ENCODE measurements at regions of chr1 and their contacts with region 1.

Region 1: GRCh38 chr1:57321776-57322175 is 102.1 kb downstream of the DAB1 start:
- DNase-seq: no peak
- H3K4me3 ChIP-seq: no peak overlapping the region
- H3K27ac ChIP-seq: no peak overlapping the region
- H3K4me1 ChIP-seq: no peaks in the 10 kb centered on the region
- H3K27me3 ChIP-seq: no peaks in the 10 kb centered on the region
- CTCF ChIP-seq: no peak
- POLR2A ChIP-seq: no peak

Region 2: DNA sequence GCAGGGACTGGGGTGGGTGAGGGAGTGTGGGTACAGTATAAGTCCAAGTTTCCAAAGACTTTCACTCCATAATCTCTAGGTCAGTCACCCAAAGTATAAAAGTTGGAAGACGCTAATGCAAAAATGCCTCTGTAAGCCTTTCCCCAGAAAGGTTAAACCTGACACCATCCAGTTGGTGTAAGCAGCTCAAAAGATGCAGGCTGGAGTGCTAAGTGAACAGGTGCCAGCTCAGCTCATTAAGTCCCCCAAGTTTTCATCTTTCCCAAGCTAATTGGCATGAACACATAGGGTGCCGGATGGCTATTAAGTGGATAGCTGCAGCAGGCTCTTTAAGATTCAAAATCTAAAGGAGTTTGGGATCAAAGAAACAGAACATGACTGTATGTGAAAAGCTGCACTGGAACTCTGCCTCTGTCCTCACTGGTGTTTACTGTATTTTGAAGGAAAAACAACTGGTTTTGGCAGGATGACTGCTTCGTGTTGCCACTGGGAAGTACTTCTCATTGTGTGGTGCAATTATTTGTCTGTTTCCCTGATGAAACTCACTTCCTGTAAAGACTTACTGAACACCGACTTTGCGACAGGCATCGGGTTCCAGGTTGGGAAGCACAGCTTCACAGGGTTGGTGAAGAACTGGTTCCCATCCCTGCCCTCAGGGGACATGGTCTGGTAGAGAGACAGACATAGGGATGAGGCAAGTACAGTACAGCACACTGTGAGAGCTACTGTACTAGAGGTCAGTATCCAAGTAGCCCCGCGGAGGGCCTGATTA is 50.7 kb before region 1 on chr1:
- intact Hi-C with region 1: no loop called
- DNase-seq: no peak
- H3K4me3 ChIP-seq: no peak overlapping the region
- H3K27ac ChIP-seq: no peak overlapping the region
- H3K4me1 ChIP-seq: no peaks in the 10 kb centered on the region
- H3K27me3 ChIP-seq: no peaks in the 10 kb centered on the region
- CTCF ChIP-seq: no peak
- POLR2A ChIP-seq: no peak

Region 3: GRCh38 chr1:57600424-57600823 is 278.6 kb after region 1 on chr1:
- intact Hi-C with region 1: loop called (anchors 10 kb)
- DNase-seq: no peak
- H3K4me3 ChIP-seq: no peak overlapping the region
- H3K27ac ChIP-seq: no peak overlapping the region
- H3K4me1 ChIP-seq: no peaks in the 10 kb centered on the region
- H3K27me3 ChIP-seq: no peaks in the 10 kb centered on the region
- CTCF ChIP-seq: no peak
- POLR2A ChIP-seq: no peak